Posterior cingulate gyrus (tissue), 11 donors: ENCODE measurements at regions of chr7 and their contacts with region 1.

Region 1: GRCh38 chr7:27576360-27576944 is 86.2 kb downstream of the HIBADH start:
- DNase-seq: no peak

Region 2: GRCh38 chr7:27210441-27211083 is 365.9 kb before region 1 on chr7:
- intact Hi-C with region 1: loop called (anchors 5 kb)
- DNase-seq: peak in 8 of 10 donors; percentile 38 to 88 (median 52)